Activated naive CD4-positive, alpha-beta T cell treated with anti-CD3 and anti-CD28 coated beads for 36 hours (primary cell): ENCODE measurements at regions of chr12 and their contacts with region 1.

Region 1: GRCh38 chr12:57899010-57899662 is 42.2 kb upstream of the ATP23 start:
- DNase-seq: peak; percentile 95
- H3K4me3 Mint-ChIP-seq: peak overlapping the region; percentile 69
- H3K27ac Mint-ChIP-seq: peak overlapping the region; percentile 99
- H3K4me1 Mint-ChIP-seq: peaks cover 60% of the 10 kb centered on the region
- H3K27me3 Mint-ChIP-seq: no peaks in the 10 kb centered on the region

Region 2: DNA sequence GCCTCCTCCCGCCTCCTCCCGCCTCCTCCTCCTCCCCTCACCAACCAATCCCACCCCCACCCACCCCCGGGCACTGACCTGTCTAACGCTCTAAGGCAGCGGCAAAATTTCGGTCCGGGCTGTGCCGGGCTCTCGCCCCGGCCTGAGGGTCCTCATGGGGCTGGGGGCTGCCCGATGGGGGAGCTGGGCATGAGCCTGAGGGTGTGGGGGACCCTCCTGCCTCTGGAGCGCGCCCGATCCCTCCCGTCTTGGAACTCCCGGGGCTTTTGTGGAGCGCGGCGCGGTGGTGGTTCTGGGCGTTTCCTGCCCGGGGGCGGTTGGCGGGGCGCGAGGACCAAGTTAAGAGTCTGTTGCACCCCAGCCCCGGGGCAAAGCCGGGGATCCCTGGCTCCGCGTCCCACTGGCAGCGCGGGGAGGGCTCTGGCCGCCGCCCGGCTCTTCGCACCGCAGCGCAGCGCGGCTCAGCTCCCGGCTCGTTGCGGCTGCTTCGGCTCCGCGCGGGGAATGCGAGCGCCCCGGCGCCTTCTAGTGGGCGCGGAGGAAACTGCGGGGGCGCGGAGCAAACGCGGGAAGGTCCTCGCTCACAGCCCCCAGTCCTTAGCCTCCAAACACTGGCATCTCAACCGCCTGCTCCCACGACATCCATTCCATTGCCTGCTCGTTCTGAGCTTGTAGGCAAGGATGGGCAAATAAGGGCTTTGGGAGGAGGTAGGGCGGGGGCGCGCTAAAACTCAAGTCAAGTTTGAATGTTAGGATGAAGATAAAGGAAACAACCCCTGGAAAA is 266.2 kb before region 1 on chr12 and contains the start of gene B4GALNT1:
- CTCF ChIA-PET with region 1: interaction called, 3 read pairs
- intact Hi-C with region 1: loop called (anchors 5 kb)
- DNase-seq: peak; percentile 65
- H3K4me3 Mint-ChIP-seq: peak within 1 kb of the TSS; percentile 73
- H3K27ac Mint-ChIP-seq: no peak within 1 kb of the TSS
- H3K4me1 Mint-ChIP-seq: peaks cover 8% of the 10 kb centered on the region
- H3K27me3 Mint-ChIP-seq: peaks cover 52% of the 10 kb centered on the region
- total RNA-seq, gene B4GALNT1: 1.4 to 1.8 TPM

Region 3: DNA sequence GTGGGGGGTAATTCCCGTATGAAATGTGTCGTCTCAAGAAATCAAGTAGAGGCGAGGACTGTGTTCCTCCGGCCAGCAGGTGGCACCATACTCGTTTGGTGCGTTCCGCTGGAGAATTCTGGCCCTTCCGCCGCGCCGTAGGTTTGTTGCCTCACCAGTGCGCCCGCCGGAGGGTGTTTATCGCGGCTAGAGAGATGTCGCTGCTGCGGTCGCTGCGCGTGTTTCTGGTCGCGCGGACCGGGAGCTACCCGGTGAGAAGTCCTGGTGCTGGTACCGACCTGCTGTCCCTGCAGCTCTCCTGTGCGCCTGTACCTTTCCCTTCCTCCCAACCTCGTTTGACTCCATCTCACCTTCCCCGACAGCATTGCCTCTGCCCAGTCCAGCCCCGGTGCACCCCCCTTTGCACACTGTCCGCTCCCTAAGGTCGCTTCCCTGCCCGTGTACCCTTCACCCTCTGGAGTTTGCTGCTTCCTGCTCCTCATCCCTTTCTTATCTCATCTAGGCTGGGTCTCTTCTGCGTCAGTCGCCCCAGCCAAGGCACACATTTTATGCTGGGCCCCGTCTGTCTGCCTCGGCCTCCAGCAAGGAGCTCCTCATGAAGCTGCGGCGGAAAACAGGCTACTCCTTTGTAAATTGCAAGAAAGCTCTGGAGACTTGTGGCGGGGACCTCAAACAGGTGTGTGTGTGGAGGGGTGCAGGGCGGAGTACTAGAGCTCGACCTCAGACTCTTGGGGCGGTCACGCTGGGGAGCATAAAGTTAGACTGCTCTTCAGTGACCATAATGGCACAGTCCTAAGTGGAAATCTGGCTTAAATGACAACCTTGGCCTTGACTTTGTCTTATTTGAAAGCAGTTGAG is 116.3 kb before region 1 on chr12 and contains the start of gene TSFM:
- CTCF ChIA-PET with region 1: interaction called, 9 read pairs
- intact Hi-C with region 1: loop called (anchors 1 kb)
- DNase-seq: peak; percentile 99
- H3K4me3 Mint-ChIP-seq: peak within 1 kb of the TSS; percentile 100
- H3K27ac Mint-ChIP-seq: peak within 1 kb of the TSS; percentile 86
- H3K4me1 Mint-ChIP-seq: peaks cover 29% of the 10 kb centered on the region
- H3K27me3 Mint-ChIP-seq: no peaks in the 10 kb centered on the region
- total RNA-seq, gene TSFM: 32.8 to 34.3 TPM

Region 4: DNA sequence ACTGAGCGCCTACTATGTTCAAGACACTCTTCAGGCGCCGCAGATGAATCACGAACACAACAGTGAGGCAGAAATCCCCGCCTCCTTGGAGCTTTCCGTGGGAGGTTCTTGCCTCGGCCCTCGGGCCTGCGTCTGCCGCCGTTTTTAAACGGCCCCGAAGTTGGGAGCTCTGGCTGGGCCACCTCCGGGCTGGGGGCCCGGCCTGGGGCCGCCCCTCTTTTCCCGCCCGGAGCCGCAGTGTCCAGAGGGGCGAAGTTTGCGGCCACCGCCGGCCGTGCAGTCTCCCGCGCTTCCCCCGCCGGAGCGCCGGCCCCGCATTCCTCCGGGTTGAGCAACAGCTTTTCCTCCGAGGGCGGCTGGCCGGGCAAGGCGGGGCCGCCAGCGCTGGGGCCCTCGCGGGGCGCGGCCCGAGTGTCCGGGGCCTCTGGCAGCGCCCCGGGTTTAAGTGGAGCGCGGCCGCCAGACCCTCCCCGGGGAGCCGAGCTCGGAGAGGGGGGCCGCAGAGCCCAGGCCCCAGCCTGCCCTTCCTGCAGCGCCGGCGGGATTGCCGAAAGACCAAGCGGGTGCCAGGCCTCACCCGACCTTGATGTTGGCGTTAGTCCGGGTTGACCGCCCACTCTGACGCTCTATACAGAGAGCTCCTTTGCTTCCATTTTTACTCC is 33.9 kb before region 1 on chr12:
- CTCF ChIA-PET with region 1: interaction called, 22 read pairs
- intact Hi-C with region 1: loop called (anchors 1 kb)
- DNase-seq: peak; percentile 82
- H3K4me3 Mint-ChIP-seq: peak overlapping the region; percentile 71
- H3K27ac Mint-ChIP-seq: peak overlapping the region; percentile 33
- H3K4me1 Mint-ChIP-seq: peaks cover 6% of the 10 kb centered on the region
- H3K27me3 Mint-ChIP-seq: no peaks in the 10 kb centered on the region

Region 5: GRCh38 chr12:57941165-57941894 is 42.2 kb after region 1 on chr12 and contains the start of gene ATP23:
- CTCF ChIA-PET with region 1: no interaction called
- intact Hi-C with region 1: loop called (anchors 1 kb)
- DNase-seq: peak; percentile 90
- H3K4me3 Mint-ChIP-seq: peak within 1 kb of the TSS; percentile 94
- H3K27ac Mint-ChIP-seq: peak within 1 kb of the TSS; percentile 96
- H3K4me1 Mint-ChIP-seq: peaks cover 38% of the 10 kb centered on the region
- H3K27me3 Mint-ChIP-seq: no peaks in the 10 kb centered on the region
- total RNA-seq, gene ATP23: 11.3 to 11.9 TPM

Region 6: GRCh38 chr12:58105225-58106119 is 206.3 kb after region 1 on chr12:
- CTCF ChIA-PET with region 1: no interaction called
- intact Hi-C with region 1: no loop called
- DNase-seq: no peak
- H3K4me3 Mint-ChIP-seq: no peak overlapping the region
- H3K27ac Mint-ChIP-seq: no peak overlapping the region
- H3K4me1 Mint-ChIP-seq: no peaks in the 10 kb centered on the region
- H3K27me3 Mint-ChIP-seq: no peaks in the 10 kb centered on the region